ENCODE measurements at regions of chr11 and their contacts with region 1.

Region 1: GRCh38 chr11:111938687-111939160 is 1.6 kb downstream of the DIXDC1 start:
- DNase-seq: peak; percentile 76
- ATAC-seq: peak; percentile 41
- H3K4me3 ChIP-seq: peak overlapping the region in 2 of 3 experiments; percentile 72 to 84; a peak in 3 of 6 replicates
- H3K27ac ChIP-seq: peak overlapping the region; percentile 90
- H3K4me1 ChIP-seq: peaks cover 74% of the 10 kb centered on the region
- H3K27me3 ChIP-seq: no peaks in the 10 kb centered on the region
- CTCF ChIP-seq: no peak
- EP300 ChIP-seq: peak in 1 of 2 experiments; percentile 67; a peak in 1 of 4 replicates
- POLR2A ChIP-seq: 0 out of 4 replicates have a peak, but pooled peaks of 1 of the 2 experiments have one; percentile 16
- RAD21 ChIP-seq: no peak

Region 2: GRCh38 chr11:111918390-111919258 is 20.1 kb before region 1 on chr11 and contains the start of gene C11orf52:
- CTCF ChIA-PET with region 1: no interaction called
- POLR2A ChIA-PET with region 1: interaction called, 30 read pairs
- in situ Hi-C with region 1: no loop called
- intact Hi-C with region 1: no loop called
- DNase-seq: peak; percentile 89
- ATAC-seq: peak; percentile 91
- H3K4me3 ChIP-seq: peak within 1 kb of the TSS; percentile 49 to 66 (median 58)
- H3K27ac ChIP-seq: peak within 1 kb of the TSS; percentile 66
- H3K4me1 ChIP-seq: peaks cover 88% of the 10 kb centered on the region
- H3K27me3 ChIP-seq: no peaks in the 10 kb centered on the region
- CTCF ChIP-seq: peak; percentile 44
- EP300 ChIP-seq: peak in 1 of 2 experiments; percentile 25; a peak in 2 of 4 replicates
- POLR2A ChIP-seq: peak; percentile 46 to 54; a peak in 2 of 4 replicates
- RAD21 ChIP-seq: peak; percentile 47; the same call in 1 of the 2 replicates
- total RNA-seq, gene C11orf52: 7.4 and 10.5 TPM in 2 replicates

Region 3: GRCh38 chr11:111926505-111927391 is 12.0 kb before region 1 on chr11:
- CTCF ChIA-PET with region 1: no interaction called
- POLR2A ChIA-PET with region 1: interaction called, 66 read pairs
- in situ Hi-C with region 1: no loop called
- intact Hi-C with region 1: no loop called
- DNase-seq: peak; percentile 93
- ATAC-seq: peak; percentile 93
- H3K4me3 ChIP-seq: peak overlapping the region; percentile 32 to 60 (median 47); a peak in 5 of 6 replicates
- H3K27ac ChIP-seq: peak overlapping the region; percentile 92
- H3K4me1 ChIP-seq: peaks cover 71% of the 10 kb centered on the region
- H3K27me3 ChIP-seq: no peaks in the 10 kb centered on the region
- CTCF ChIP-seq: no peak
- EP300 ChIP-seq: peak in 1 of 2 experiments; percentile 50; a peak in 2 of 4 replicates
- POLR2A ChIP-seq: peak; percentile 67 to 84
- RAD21 ChIP-seq: no peak

Region 4: DNA sequence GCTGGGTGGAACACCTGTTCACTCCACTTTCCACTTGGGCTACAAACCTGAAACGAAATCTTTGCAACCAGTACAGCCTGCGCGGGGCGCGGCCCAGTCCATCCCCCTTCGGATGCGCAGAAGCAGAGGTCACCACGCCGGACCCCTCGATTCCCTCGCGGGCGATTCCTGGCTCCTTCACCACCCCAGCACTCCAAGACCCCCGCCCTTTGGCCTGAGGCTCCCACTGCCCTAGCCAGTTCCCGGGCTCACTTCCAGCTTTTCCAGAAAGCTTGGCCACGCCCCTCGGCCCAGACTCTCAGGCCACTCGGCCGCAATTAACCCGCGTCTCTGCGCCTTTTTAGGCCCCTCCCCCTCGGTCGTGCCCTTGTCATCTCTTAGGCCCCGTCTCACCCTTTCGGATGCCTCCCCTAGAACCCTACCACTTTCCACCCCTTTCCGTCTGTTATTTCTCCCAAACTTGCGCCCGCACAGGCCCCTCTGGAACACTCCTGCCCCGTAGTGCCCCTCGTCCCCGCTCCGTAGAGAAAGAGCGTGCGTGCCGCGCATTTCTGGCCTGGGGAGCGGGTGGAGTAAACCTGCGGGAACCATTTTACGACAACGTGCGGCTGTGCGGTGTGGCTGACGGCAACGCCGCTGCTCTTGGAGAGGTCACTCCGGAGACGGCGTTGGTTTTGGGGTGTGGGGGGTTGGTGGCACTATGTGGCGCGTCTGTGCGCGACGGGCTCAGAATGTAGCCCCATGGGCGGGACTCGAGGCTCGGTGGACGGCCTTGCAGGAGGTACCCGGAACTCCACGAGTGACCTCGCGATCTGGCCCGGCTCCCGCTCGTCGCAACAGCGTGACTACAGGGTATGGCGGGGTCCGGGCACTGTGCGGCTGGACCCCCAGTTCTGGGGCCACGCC is 86.3 kb after region 1 on chr11 and contains the start of gene DLAT:
- CTCF ChIA-PET with region 1: no interaction called
- POLR2A ChIA-PET with region 1: interaction called, 6 read pairs
- in situ Hi-C with region 1: no loop called
- intact Hi-C with region 1: loop called (anchors 10 kb)
- DNase-seq: peak; percentile 85
- ATAC-seq: peak; percentile 88
- H3K4me3 ChIP-seq: peak within 1 kb of the TSS; percentile 82 to 90 (median 87)
- H3K27ac ChIP-seq: peak within 1 kb of the TSS; percentile 90
- H3K4me1 ChIP-seq: peaks cover 17% of the 10 kb centered on the region
- H3K27me3 ChIP-seq: no peaks in the 10 kb centered on the region; a peak in 2 of 5 replicates
- CTCF ChIP-seq: 0 out of 2 replicates have a peak, but pooled peaks have one; percentile 13
- EP300 ChIP-seq: no peak
- POLR2A ChIP-seq: peak; percentile 57 to 59
- RAD21 ChIP-seq: no peak; the same call in 1 of the 2 replicates
- total RNA-seq, gene DLAT: 62.2 and 73.2 TPM in 2 replicates

Region 5: GRCh38 chr11:112074026-112074811 is 135.5 kb after region 1 on chr11 and contains the start of gene NKAPD1:
- CTCF ChIA-PET with region 1: no interaction called
- POLR2A ChIA-PET with region 1: no interaction called
- in situ Hi-C with region 1: no loop called
- intact Hi-C with region 1: loop called (anchors 5 kb)
- DNase-seq: peak; percentile 85
- ATAC-seq: peak; percentile 91
- H3K4me3 ChIP-seq: peak within 1 kb of the TSS; percentile 81 to 99 (median 99)
- H3K27ac ChIP-seq: peak within 1 kb of the TSS; percentile 99
- H3K4me1 ChIP-seq: peaks cover 15% of the 10 kb centered on the region
- H3K27me3 ChIP-seq: no peaks in the 10 kb centered on the region; a peak in 1 of 5 replicates
- CTCF ChIP-seq: no peak
- EP300 ChIP-seq: no peak
- POLR2A ChIP-seq: peak in 1 of 2 experiments; percentile 60; a peak in 3 of 4 replicates
- RAD21 ChIP-seq: no peak
- total RNA-seq, gene NKAPD1: 22.5 and 31.8 TPM in 2 replicates

Region 6: DNA sequence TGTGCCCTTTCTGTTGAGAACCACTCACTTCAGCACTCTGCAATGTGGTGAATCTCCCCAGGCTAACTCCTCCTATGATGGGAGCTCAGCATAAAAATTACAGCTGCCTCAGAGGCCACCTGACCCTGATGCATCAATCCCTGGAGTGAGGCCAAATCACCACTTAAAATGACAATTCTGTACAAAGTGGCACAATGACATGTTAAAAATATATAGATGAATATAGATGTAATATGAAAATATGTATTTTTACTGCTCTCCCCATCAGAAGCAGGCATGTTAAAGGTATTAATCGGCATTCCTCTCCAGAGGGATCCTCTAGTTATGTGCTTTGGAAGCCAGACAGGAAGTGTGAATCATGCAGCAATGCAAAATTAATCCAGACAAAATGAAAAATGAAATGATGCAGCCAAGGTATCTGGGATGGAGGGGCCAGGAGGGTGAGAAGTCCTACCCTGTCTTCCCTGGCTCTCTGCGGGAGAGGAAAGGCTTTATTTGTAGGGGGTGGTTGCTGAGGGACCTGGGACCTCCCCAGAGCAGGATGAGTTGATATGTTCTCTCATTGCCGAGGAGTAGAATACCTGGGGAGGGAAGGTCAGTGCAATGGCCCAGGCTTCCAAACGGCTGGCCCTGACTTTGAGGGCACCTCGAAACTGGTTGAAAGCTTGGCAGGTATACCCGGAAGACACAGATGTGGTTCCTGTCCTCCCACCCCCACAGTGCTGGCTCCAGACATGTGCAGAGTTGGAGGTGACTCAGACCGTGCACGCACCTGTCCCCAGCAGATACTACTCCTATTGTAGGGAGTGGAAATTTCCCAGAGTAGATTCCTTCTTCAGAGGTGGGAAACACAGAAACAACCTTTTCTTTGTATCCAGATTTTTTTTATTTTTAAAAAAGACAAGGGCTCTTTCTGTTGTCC is 674.6 kb after region 1 on chr11:
- CTCF ChIA-PET with region 1: no interaction called
- POLR2A ChIA-PET with region 1: no interaction called
- in situ Hi-C with region 1: no loop called
- intact Hi-C with region 1: no loop called
- DNase-seq: peak; percentile 23
- ATAC-seq: peak; percentile 66
- H3K4me3 ChIP-seq: no peak overlapping the region
- H3K27ac ChIP-seq: no peak overlapping the region
- H3K4me1 ChIP-seq: peaks cover 19% of the 10 kb centered on the region
- H3K27me3 ChIP-seq: 0 out of 5 replicates have a peak, but pooled peaks cover 0 to 4% of the 10 kb centered on the region in 2 experiments
- CTCF ChIP-seq: no peak
- EP300 ChIP-seq: no peak
- POLR2A ChIP-seq: no peak
- RAD21 ChIP-seq: no peak